BJ (cell line): ENCODE measurements at regions of chr1 and their contacts with region 1.

Region 1: GRCh38 chr1:157969697-157970485 is 23.6 kb upstream of the KIRREL1 start:
- DNase-seq: peak; percentile 55
- H3K4me3 ChIP-seq: no peak overlapping the region
- H3K27me3 ChIP-seq: no peaks in the 10 kb centered on the region
- CTCF ChIP-seq: peak; percentile 93

Region 2: GRCh38 chr1:157984469-157984868 is 14.6 kb after region 1 on chr1:
- CTCF ChIA-PET with region 1: interaction called, 96 read pairs
- POLR2A ChIA-PET with region 1: no interaction called
- DNase-seq: no peak
- H3K4me3 ChIP-seq: no peak overlapping the region
- H3K27me3 ChIP-seq: peaks cover 9% of the 10 kb centered on the region
- CTCF ChIP-seq: no peak

Region 3: GRCh38 chr1:158087320-158087927 is 117.5 kb after region 1 on chr1:
- CTCF ChIA-PET with region 1: interaction called, 20 read pairs
- POLR2A ChIA-PET with region 1: no interaction called
- DNase-seq: no peak
- H3K4me3 ChIP-seq: no peak overlapping the region
- H3K27me3 ChIP-seq: no peaks in the 10 kb centered on the region
- CTCF ChIP-seq: peak; percentile 91

Region 4: DNA sequence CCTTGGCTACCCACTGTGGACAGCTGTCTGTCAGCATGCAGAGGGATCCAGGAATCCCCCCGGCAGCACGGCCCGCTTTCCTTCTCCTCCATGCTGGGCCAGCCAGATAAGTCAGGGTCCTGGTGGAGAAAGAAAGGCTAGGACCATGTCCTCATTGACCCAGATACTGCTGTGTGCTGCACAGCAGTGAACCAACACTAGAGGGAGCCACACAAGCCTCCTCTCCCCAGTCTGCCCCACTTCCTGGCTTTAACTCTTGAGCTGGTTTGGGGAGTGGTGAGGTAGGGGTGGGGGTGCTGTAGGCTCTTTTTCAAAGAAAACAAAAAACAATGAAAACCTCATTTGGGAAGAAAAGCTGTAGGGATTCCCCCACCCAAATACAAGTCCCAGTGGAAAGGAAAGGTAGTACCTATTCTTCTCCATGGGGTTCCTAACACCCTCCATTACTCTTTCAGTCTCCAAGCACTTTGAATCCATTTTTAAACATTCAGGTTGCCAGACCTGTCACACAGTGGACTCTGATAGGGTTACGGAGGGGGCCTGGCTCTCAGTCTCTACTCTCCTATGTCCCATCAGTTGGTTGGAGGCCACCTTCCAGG is 125.9 kb after region 1 on chr1:
- CTCF ChIA-PET with region 1: interaction called, 11 read pairs
- POLR2A ChIA-PET with region 1: no interaction called
- DNase-seq: no peak
- H3K4me3 ChIP-seq: no peak overlapping the region
- H3K27me3 ChIP-seq: no peaks in the 10 kb centered on the region
- CTCF ChIP-seq: peak; percentile 81